Activated B cell treated with CpG ODN at 0.5 μM for 24 hours (primary cell): ENCODE measurements at regions of chr7 and their contacts with region 1.

Region 1: GRCh38 chr7:5450549-5451372 is 27.1 kb upstream of the TNRC18 start:
- DNase-seq: peak; percentile 31
- ATAC-seq: peak; percentile 75
- H3K4me3 Mint-ChIP-seq: no peak overlapping the region
- H3K27ac Mint-ChIP-seq: no peak overlapping the region
- H3K4me1 Mint-ChIP-seq: peaks cover 1% of the 10 kb centered on the region
- H3K27me3 Mint-ChIP-seq: peaks cover 2% of the 10 kb centered on the region
- CTCF ChIP-seq: no peak

Region 2: DNA sequence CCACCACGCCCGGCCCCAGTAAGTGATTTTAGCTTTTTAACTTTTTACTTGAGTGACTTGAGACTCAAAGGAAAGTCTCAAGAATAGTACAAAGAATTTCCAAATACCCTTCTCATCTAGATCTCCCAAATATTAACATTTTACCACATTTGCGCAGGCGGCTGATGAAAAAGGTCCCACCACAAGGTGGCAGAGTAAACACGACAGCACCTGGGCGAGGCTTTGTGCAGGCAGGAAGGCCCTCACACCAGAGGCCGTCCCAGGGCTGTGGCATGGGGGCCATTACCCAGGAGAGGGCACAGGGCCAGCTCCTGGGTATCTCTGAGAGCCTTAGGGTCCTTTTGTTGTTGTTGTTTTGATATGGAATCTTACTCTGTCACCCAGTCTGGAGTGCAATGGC is 310.8 kb before region 1 on chr7:
- CTCF ChIA-PET with region 1: no interaction called
- POLR2A ChIA-PET with region 1: no interaction called
- intact Hi-C with region 1: loop called (anchors 1 kb)
- DNase-seq: no peak
- ATAC-seq: no peak
- H3K4me3 Mint-ChIP-seq: no peak overlapping the region
- H3K27ac Mint-ChIP-seq: no peak overlapping the region
- H3K4me1 Mint-ChIP-seq: peaks cover 12% of the 10 kb centered on the region
- H3K27me3 Mint-ChIP-seq: peaks cover 2% of the 10 kb centered on the region
- CTCF ChIP-seq: no peak

Region 3: DNA sequence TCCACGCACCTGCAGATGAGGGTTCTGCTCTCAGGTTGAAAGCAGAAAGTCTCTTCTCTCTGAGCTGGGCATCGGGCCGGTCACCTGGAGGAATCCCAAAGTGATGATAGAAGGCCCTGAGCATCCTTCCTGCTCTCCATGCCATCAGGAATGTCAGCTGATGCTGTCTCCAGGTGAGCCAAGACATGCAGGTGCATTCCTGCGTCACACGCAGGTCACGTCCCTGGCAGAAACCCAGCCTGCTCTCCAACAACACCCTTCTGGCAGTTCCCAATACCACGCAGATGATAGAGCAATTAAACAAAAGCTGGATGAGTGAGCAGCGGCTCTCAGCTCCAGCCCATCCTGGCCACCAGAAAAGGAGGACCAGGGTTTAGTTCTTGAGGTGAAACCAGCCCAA is 267.6 kb before region 1 on chr7:
- CTCF ChIA-PET with region 1: no interaction called
- POLR2A ChIA-PET with region 1: no interaction called
- intact Hi-C with region 1: no loop called
- DNase-seq: no peak
- ATAC-seq: no peak
- H3K4me3 Mint-ChIP-seq: no peak overlapping the region
- H3K27ac Mint-ChIP-seq: no peak overlapping the region
- H3K4me1 Mint-ChIP-seq: no peaks in the 10 kb centered on the region
- H3K27me3 Mint-ChIP-seq: peaks cover 11% of the 10 kb centered on the region
- CTCF ChIP-seq: no peak

Region 4: GRCh38 chr7:5363729-5364128 is 87.0 kb before region 1 on chr7:
- CTCF ChIA-PET with region 1: interaction called, 6 read pairs
- POLR2A ChIA-PET with region 1: no interaction called
- intact Hi-C with region 1: loop called (anchors 1 kb)
- DNase-seq: no peak
- ATAC-seq: no peak
- H3K4me3 Mint-ChIP-seq: no peak overlapping the region
- H3K27ac Mint-ChIP-seq: no peak overlapping the region
- H3K4me1 Mint-ChIP-seq: peaks cover 22% of the 10 kb centered on the region
- H3K27me3 Mint-ChIP-seq: no peaks in the 10 kb centered on the region
- CTCF ChIP-seq: no peak

Region 5: GRCh38 chr7:5586279-5586962 is 135.7 kb after region 1 on chr7:
- CTCF ChIA-PET with region 1: no interaction called
- POLR2A ChIA-PET with region 1: no interaction called
- intact Hi-C with region 1: no loop called
- DNase-seq: no peak
- ATAC-seq: no peak
- H3K4me3 Mint-ChIP-seq: no peak overlapping the region
- H3K27ac Mint-ChIP-seq: no peak overlapping the region
- H3K4me1 Mint-ChIP-seq: peaks cover 15% of the 10 kb centered on the region
- H3K27me3 Mint-ChIP-seq: peaks cover 3% of the 10 kb centered on the region
- CTCF ChIP-seq: no peak